ENCODE measurements at regions of chr2 and their contacts with region 1.

Region 1: GRCh38 chr2:20635675-20636584 is 15.0 kb downstream of the HS1BP3 start:
- DNase-seq: peak; percentile 78
- H3K4me3 Mint-ChIP-seq: no peak overlapping the region
- H3K27ac Mint-ChIP-seq: peak overlapping the region; percentile 2
- H3K4me1 Mint-ChIP-seq: peaks cover 13% of the 10 kb centered on the region
- H3K27me3 Mint-ChIP-seq: no peaks in the 10 kb centered on the region
- CTCF ChIP-seq: peak; percentile 98

Region 2: GRCh38 chr2:19785447-19785846 is 850.5 kb before region 1 on chr2:
- CTCF ChIA-PET with region 1: no interaction called
- POLR2A ChIA-PET with region 1: no interaction called
- intact Hi-C with region 1: no loop called
- DNase-seq: peak; percentile 86
- H3K4me3 Mint-ChIP-seq: no peak overlapping the region
- H3K27ac Mint-ChIP-seq: peak overlapping the region; percentile 82
- H3K4me1 Mint-ChIP-seq: peaks cover 28% of the 10 kb centered on the region
- H3K27me3 Mint-ChIP-seq: no peaks in the 10 kb centered on the region
- CTCF ChIP-seq: no peak

Region 3: DNA sequence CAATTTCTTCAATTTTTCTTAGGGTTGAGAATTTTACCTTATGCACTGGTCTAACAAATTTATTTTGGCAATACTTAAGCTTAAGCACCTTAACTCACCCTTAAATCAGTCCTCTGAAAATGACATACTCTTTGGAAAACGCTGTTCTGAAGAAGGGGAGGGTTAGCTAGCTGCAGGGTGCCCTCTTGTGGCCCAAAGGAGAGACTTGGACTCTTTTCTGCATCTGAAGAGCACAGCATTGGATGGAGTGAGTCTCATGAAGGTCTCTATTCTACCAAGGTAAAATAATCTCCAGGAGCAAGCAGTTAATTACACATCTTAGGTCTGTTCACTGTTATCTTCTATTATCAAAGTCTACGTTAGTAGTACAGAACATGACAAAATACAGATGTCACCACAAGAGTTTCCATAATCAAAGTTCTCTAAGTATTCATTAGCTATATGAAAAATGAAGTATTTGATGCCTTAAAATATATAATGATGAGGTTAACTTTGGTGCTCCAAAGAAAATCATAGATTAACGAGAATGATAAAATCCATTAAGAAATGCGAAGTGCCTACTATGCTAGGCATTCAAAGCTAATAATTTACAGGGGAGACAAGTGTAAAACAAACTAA is 309.7 kb before region 1 on chr2:
- CTCF ChIA-PET with region 1: interaction called, 34 read pairs
- POLR2A ChIA-PET with region 1: interaction called, 3 read pairs
- intact Hi-C with region 1: no loop called
- DNase-seq: peak; percentile 71
- H3K4me3 Mint-ChIP-seq: no peak overlapping the region
- H3K27ac Mint-ChIP-seq: peak overlapping the region; percentile 39
- H3K4me1 Mint-ChIP-seq: peaks cover 8% of the 10 kb centered on the region
- H3K27me3 Mint-ChIP-seq: no peaks in the 10 kb centered on the region
- CTCF ChIP-seq: peak; percentile 78

Region 4: DNA sequence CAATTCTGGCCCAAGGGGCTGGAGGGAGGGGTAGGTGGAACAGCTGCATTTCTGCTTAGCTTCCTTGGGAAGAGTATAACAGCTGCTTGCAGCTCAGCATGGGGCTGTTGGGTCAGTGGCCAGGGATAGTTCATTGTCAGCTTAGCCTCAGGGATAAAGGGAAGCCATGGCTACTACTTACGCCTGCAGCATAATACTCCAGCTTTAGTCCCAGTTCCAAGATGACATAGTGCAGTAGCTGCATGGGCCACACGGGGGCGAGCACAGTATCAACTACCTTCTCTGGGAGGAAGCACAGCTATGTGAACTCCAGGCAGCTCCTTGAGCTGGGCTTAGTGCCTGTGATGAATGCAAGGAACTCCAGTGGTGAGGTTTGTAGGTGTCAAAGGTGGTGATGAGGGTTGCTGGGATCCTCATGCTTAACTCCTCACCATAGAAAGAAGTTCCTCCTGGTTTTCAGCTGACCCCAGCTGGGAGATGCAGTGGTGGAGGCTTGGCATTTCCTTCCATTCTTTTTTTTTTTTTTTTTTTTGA is 224.5 kb before region 1 on chr2:
- CTCF ChIA-PET with region 1: interaction called, 71 read pairs
- POLR2A ChIA-PET with region 1: interaction called, 6 read pairs
- intact Hi-C with region 1: no loop called
- DNase-seq: peak; percentile 88
- H3K4me3 Mint-ChIP-seq: no peak overlapping the region
- H3K27ac Mint-ChIP-seq: no peak overlapping the region
- H3K4me1 Mint-ChIP-seq: peaks cover 23% of the 10 kb centered on the region
- H3K27me3 Mint-ChIP-seq: no peaks in the 10 kb centered on the region
- CTCF ChIP-seq: peak; percentile 74

Region 5: GRCh38 chr2:20446917-20447436 is 189.0 kb before region 1 on chr2 and contains the start of gene RHOB:
- CTCF ChIA-PET with region 1: interaction called, 121 read pairs
- POLR2A ChIA-PET with region 1: interaction called, 22 read pairs
- intact Hi-C with region 1: loop called (anchors 1 kb)
- DNase-seq: peak; percentile 97
- H3K4me3 Mint-ChIP-seq: peak within 1 kb of the TSS; percentile 71
- H3K27ac Mint-ChIP-seq: no peak within 1 kb of the TSS
- H3K4me1 Mint-ChIP-seq: no peaks in the 10 kb centered on the region
- H3K27me3 Mint-ChIP-seq: no peaks in the 10 kb centered on the region
- CTCF ChIP-seq: no peak
- total RNA-seq, gene RHOB: 28.1 and 45.7 TPM in 2 replicates

Region 6: GRCh38 chr2:20595431-20596192 is 40.3 kb before region 1 on chr2:
- CTCF ChIA-PET with region 1: interaction called, 10 read pairs
- POLR2A ChIA-PET with region 1: no interaction called
- intact Hi-C with region 1: loop called (anchors 2 kb)
- DNase-seq: peak; percentile 72
- H3K4me3 Mint-ChIP-seq: no peak overlapping the region
- H3K27ac Mint-ChIP-seq: peak overlapping the region; percentile 36
- H3K4me1 Mint-ChIP-seq: peaks cover 28% of the 10 kb centered on the region
- H3K27me3 Mint-ChIP-seq: no peaks in the 10 kb centered on the region
- CTCF ChIP-seq: no peak

Region 7: DNA sequence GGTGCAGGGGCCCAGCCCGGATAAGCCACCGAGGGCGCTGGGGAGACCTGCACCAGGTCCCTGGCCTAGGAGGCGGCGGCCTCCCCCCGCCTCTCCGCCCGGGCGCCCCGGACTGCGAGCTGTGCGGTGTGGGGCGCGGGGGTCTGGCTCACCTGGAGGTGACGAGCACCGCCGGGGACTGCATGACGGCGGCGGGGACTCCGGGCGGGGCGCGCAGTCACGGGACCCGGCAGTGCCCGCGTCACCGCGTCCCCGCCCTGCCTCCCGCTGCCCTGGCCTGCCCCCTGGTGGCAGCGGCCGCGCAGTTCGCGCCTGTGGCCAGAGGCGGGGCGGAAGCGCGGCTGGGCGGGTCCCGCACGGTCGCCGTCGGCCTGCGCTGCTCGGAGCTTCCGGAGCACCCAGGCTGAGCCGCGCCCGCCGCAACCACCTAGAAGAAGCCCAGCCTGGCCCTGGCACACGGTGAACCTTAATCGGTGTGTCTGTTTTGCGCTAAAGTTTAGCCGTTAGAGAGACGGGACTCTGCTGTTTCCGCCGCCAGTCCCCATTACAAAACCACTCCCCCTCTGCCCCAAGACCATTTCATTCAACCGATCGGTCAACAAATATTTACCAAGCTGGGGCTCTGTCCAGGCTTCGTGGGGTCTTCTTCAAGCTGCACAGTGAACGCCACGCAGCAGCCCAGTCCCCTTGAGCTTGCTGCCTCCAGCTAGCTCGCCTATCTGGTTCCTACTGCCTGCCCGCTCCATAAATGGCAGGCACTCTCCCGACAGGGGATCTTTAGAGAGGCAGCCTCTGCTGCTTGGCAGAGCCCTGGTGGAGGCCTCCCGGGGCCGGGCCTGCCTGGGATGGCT is 15.2 kb after region 1 on chr2 and contains the start of gene HS1BP3:
- CTCF ChIA-PET with region 1: interaction called, 37 read pairs
- POLR2A ChIA-PET with region 1: interaction called, 4 read pairs
- intact Hi-C with region 1: no loop called
- DNase-seq: peak; percentile 81
- H3K4me3 Mint-ChIP-seq: peak within 1 kb of the TSS; percentile 82
- H3K27ac Mint-ChIP-seq: peak within 1 kb of the TSS; percentile 62
- H3K4me1 Mint-ChIP-seq: peaks cover 22% of the 10 kb centered on the region
- H3K27me3 Mint-ChIP-seq: peaks cover 12% of the 10 kb centered on the region
- CTCF ChIP-seq: peak; percentile 89
- total RNA-seq, gene HS1BP3: 10.0 and 25.1 TPM in 2 replicates

Region 8: GRCh38 chr2:20966061-20966595 is 330.2 kb after region 1 on chr2:
- CTCF ChIA-PET with region 1: no interaction called
- POLR2A ChIA-PET with region 1: no interaction called
- intact Hi-C with region 1: no loop called
- DNase-seq: no peak
- H3K4me3 Mint-ChIP-seq: no peak overlapping the region
- H3K27ac Mint-ChIP-seq: no peak overlapping the region
- H3K4me1 Mint-ChIP-seq: no peaks in the 10 kb centered on the region
- H3K27me3 Mint-ChIP-seq: peaks cover 36% of the 10 kb centered on the region
- CTCF ChIP-seq: no peak

Measured in MCF 10A (cell line).